H1 (cell line): ENCODE measurements at regions of chr11 and their contacts with region 1.

Region 1: DNA sequence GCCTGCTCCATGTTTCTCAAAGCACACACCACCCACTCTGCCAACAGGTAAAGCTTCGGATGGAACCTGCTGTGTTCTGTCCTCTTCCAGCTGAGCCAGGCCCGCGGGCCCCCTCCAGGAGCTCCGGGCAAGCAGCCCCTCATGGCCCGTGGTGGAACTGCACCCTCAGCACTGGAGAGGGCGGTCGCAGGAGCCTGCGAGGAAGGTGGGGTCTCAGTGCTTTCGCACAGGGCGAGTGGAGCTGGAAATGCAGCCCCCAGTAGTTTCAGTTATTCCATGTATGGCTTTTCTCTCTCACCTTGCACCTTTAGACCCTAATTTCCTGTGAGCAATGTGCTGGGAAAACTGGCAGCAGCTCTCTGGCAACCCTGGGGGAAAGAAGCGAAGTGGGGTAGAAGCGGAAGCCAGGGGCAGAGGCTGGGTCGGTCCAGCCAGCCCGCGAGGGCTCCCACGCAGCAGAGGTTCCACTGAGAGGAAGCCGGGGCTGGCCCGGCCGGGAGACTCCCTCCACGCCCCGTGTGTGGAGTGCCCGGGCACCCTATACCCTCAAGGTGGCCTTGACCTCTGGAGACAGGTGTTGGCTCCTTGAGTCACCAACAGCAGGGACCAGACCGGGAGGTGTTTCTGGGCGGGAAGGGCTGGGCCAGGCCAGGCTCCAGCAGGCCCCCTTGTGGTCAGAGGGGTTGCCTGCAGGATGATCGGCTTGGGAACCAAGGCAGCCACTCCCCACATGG is 119.9 kb upstream of the TMEM45B start:
- DNase-seq: peak; percentile 41 to 91
- H3K4me3 ChIP-seq: peak overlapping the region; percentile 17 to 53 (median 24); a peak in 7 of 8 replicates
- H3K27ac ChIP-seq: no peak overlapping the region
- H3K4me1 ChIP-seq: peaks cover 0 to 3% (median 1%) of the 10 kb centered on the region in 4 experiments; a peak in 2 of 7 replicates
- H3K27me3 ChIP-seq: peaks cover 0 to 4% (median 3%) of the 10 kb centered on the region in 4 experiments; a peak in 3 of 7 replicates
- CTCF ChIP-seq: peak; percentile 79 to 81 (median 80)
- EP300 ChIP-seq: no peak
- POLR2A ChIP-seq: no peak
- RAD21 ChIP-seq: peak; percentile 61 to 67

Region 2: GRCh38 chr11:129364143-129364654 is 331.5 kb before region 1 on chr11:
- CTCF ChIA-PET with region 1: interaction called, 10 read pairs
- POLR2A ChIA-PET with region 1: no interaction called
- DNase-seq: peak; percentile 90 to 91
- H3K4me3 ChIP-seq: no peak overlapping the region
- H3K27ac ChIP-seq: no peak overlapping the region
- H3K4me1 ChIP-seq: no peaks in the 10 kb centered on the region
- H3K27me3 ChIP-seq: peaks cover 0 to 6% (median 2%) of the 10 kb centered on the region in 4 experiments; a peak in 5 of 7 replicates
- CTCF ChIP-seq: peak; percentile 100
- EP300 ChIP-seq: no peak; a peak in 1 of 3 replicates
- POLR2A ChIP-seq: no peak
- RAD21 ChIP-seq: peak; percentile 100

Region 3: DNA sequence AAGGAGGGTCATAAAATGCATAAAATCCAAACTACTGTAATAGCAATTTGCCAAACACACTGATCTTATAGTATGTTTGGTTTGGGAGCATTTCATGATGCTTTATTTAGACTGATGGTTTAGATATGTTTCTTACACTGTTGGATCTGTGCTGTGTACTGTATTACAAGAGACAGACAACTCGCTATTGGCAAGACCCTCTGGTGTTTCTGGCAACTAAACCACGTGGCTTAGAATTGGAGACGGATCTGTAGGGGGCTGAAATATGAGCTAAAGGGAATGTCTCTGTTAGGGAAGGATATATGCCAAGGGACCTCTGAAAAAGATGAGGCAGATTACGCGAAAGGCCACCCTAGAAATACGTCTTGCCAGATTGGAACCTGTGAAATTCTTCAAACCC is 111.4 kb before region 1 on chr11:
- CTCF ChIA-PET with region 1: interaction called, 16 read pairs
- POLR2A ChIA-PET with region 1: no interaction called
- DNase-seq: no peak
- H3K4me3 ChIP-seq: no peak overlapping the region
- H3K27ac ChIP-seq: no peak overlapping the region
- H3K4me1 ChIP-seq: peaks cover 0 to 3% (median 2%) of the 10 kb centered on the region in 4 experiments; a peak in 3 of 7 replicates
- H3K27me3 ChIP-seq: peaks cover 0 to 2% (median 0%) of the 10 kb centered on the region in 4 experiments; a peak in 1 of 7 replicates
- CTCF ChIP-seq: no peak
- EP300 ChIP-seq: no peak
- POLR2A ChIP-seq: no peak
- RAD21 ChIP-seq: no peak

Region 4: DNA sequence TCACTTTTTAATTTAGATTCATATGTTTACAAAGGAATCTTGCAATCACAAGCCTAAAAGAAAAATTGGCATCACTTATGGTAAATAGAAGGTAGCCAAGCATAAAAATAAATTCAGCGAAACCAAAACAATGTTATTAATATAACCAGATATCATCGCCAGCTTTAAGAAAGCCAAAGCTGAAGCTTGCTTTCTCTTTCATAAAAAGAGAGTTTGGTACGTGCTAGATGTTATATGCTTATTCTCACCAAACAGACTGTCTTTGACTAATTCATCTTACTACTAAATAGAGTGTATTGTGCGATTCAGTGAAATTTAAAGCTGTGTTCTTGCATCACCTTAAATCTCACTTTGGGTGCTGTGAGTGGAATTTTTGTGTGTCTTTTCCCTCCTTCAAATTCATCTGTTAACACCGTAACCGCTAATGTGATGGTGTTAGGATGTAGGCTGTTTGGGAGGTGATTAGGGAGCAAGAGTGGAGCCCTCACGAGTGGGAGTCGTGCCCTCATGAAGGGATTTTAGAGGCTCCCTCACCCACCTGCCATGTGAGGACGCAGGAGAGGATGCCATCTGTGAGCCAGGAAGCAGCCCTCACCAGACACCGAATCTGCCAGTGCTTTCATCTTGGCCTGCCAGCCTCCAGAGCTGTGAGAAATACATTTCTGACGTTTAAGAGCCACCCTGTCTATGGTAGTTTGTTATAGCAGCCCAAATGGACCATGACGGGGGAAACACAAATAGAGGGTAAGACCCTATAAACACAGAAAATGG is 14.2 kb before region 1 on chr11:
- CTCF ChIA-PET with region 1: interaction called, 33 read pairs
- POLR2A ChIA-PET with region 1: no interaction called
- DNase-seq: no peak
- H3K4me3 ChIP-seq: no peak overlapping the region
- H3K27ac ChIP-seq: no peak overlapping the region
- H3K4me1 ChIP-seq: no peaks in the 10 kb centered on the region
- H3K27me3 ChIP-seq: no peaks in the 10 kb centered on the region; a peak in 2 of 7 replicates
- CTCF ChIP-seq: no peak
- EP300 ChIP-seq: no peak
- POLR2A ChIP-seq: no peak
- RAD21 ChIP-seq: no peak

Region 5: GRCh38 chr11:129743111-129743815 is 47.5 kb after region 1 on chr11:
- CTCF ChIA-PET with region 1: interaction called, 91 read pairs
- POLR2A ChIA-PET with region 1: no interaction called
- DNase-seq: no peak
- H3K4me3 ChIP-seq: no peak overlapping the region
- H3K27ac ChIP-seq: no peak overlapping the region
- H3K4me1 ChIP-seq: no peaks in the 10 kb centered on the region
- H3K27me3 ChIP-seq: no peaks in the 10 kb centered on the region
- CTCF ChIP-seq: no peak
- EP300 ChIP-seq: no peak
- POLR2A ChIP-seq: no peak
- RAD21 ChIP-seq: no peak